Caco-2 (cell line): ENCODE measurements at regions of chrX and their contacts with region 1.

Region 1: DNA sequence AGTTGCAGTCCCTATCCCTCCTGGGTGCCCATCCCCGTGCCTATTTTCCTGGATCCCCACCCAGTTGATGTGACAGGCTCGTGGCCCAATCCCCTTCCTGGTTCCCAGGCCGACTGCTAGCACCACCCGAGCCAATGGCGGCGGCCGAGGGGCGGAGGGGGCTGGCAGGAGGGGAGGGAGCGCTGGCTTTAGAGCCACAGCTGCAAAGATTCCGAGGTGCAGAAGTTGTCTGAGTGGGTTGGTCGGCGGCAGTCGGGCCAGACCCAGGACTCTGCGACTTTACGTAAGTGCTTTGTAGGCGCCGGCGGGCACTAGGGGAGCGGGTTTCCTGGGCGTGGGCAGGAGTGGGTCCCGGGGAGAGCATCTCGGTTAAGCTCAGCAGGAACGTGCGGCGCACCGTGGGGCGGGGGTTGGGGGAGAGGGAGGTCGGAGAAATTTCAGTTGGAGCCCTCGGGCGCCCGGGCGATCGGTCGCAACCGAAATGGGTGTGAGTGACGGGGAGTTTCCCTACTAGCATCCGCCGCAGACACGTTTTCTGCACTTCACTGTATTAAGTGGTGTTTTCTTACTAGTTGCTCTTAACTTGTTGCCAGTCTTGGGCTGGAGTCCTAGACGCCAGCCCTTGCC is at the start of gene PLS3:
- DNase-seq: peak; percentile 86 to 92
- H3K4me3 ChIP-seq: peak within 1 kb of the TSS; percentile 85
- H3K4me3 Mint-ChIP-seq: peak within 1 kb of the TSS; percentile 90
- H3K27ac Mint-ChIP-seq: peak within 1 kb of the TSS; percentile 94
- H3K4me1 ChIP-seq: peaks cover 18% of the 10 kb centered on the region
- H3K4me1 Mint-ChIP-seq: no peaks in the 10 kb centered on the region
- H3K27me3 ChIP-seq: no peaks in the 10 kb centered on the region
- H3K27me3 Mint-ChIP-seq: no peaks in the 10 kb centered on the region
- CTCF ChIP-seq: no peak
- total RNA-seq, gene PLS3: 211 and 213 TPM in 2 replicates

Region 2: DNA sequence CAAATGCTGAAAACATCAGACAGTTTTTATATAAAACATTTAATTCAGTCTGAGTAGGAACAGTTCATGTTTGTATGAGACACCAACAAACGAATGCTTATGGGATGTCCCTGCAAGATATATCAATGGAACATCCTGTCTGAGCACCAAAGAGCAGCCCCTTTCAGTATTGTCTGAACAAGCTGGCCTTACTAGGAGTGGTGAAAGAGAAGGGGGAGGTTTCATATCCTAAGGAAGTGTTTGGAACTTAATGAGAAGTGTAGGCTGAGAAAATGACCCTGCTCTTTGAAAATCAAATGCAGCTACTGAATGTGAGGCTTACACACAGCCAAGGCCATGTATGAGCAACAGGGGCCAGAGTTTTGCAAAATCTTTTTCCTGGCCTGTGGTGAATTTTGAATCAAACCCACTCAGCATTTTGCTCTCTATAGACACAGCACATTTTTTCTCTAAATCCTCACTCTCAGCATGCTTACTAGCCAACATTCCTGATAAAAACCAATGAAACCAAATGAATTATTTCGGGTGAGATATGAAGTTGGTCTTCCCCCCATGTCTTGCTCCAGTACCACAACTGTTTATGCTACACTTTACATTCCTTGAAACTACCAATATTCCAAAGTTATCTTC is 152.2 kb before region 1 on chrX:
- CTCF ChIA-PET with region 1: no interaction called
- POLR2A ChIA-PET with region 1: no interaction called
- intact Hi-C with region 1: loop called (anchors 2 kb)
- DNase-seq: no peak
- H3K4me3 ChIP-seq: no peak overlapping the region
- H3K4me3 Mint-ChIP-seq: no peak overlapping the region
- H3K27ac Mint-ChIP-seq: no peak overlapping the region
- H3K4me1 ChIP-seq: peaks cover 50% of the 10 kb centered on the region
- H3K4me1 Mint-ChIP-seq: peaks cover 22% of the 10 kb centered on the region
- H3K27me3 ChIP-seq: no peaks in the 10 kb centered on the region
- H3K27me3 Mint-ChIP-seq: no peaks in the 10 kb centered on the region
- CTCF ChIP-seq: no peak

Region 3: GRCh38 chrX:115583496-115584004 is 22.5 kb after region 1 on chrX:
- CTCF ChIA-PET with region 1: no interaction called
- POLR2A ChIA-PET with region 1: interaction called, 5 read pairs
- intact Hi-C with region 1: loop called (anchors 2 kb)
- DNase-seq: no peak
- H3K4me3 ChIP-seq: no peak overlapping the region
- H3K4me3 Mint-ChIP-seq: no peak overlapping the region
- H3K27ac Mint-ChIP-seq: no peak overlapping the region
- H3K4me1 ChIP-seq: peaks cover 25% of the 10 kb centered on the region
- H3K4me1 Mint-ChIP-seq: peaks cover 21% of the 10 kb centered on the region
- H3K27me3 ChIP-seq: no peaks in the 10 kb centered on the region
- H3K27me3 Mint-ChIP-seq: no peaks in the 10 kb centered on the region
- CTCF ChIP-seq: no peak

Region 4: DNA sequence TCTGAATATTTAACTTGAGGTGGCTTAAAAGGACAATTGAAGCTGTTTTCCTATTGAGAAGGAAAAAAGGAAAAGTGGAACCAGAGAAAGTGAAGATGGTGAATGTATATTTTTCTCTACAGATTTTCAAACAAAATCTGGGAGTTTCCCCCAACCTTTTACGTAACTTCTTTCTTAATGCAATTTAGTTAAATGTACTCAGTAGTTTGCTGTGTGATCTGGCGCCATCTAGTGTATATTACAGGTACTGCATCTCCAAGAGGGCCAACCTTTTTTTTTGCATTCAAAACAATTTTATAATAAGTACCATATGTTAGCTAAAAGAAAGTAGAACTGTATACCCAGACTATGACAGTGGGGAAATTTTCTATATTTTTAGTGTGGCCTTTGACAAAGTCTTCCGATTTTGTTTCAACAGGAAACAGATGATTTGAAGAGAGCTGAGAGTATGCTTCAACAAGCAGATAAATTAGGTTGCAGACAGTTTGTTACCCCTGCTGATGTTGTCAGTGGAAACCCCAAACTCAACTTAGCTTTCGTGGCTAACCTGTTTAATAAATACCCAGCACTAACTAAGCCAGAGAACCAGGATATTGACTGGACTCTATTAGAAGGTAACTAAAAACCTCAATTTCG is 81.9 kb after region 1 on chrX:
- CTCF ChIA-PET with region 1: no interaction called
- POLR2A ChIA-PET with region 1: no interaction called
- intact Hi-C with region 1: loop called (anchors 5 kb)
- DNase-seq: peak in 1 of 2 experiments; percentile 48
- H3K4me3 ChIP-seq: no peak overlapping the region
- H3K4me3 Mint-ChIP-seq: no peak overlapping the region
- H3K27ac Mint-ChIP-seq: no peak overlapping the region
- H3K4me1 ChIP-seq: no peaks in the 10 kb centered on the region
- H3K4me1 Mint-ChIP-seq: peaks cover 10% of the 10 kb centered on the region
- H3K27me3 ChIP-seq: no peaks in the 10 kb centered on the region
- H3K27me3 Mint-ChIP-seq: no peaks in the 10 kb centered on the region
- CTCF ChIP-seq: peak; percentile 54 to 66